A549 (cell line): ENCODE measurements at regions of chr5 and their contacts with region 1.

Region 1: DNA sequence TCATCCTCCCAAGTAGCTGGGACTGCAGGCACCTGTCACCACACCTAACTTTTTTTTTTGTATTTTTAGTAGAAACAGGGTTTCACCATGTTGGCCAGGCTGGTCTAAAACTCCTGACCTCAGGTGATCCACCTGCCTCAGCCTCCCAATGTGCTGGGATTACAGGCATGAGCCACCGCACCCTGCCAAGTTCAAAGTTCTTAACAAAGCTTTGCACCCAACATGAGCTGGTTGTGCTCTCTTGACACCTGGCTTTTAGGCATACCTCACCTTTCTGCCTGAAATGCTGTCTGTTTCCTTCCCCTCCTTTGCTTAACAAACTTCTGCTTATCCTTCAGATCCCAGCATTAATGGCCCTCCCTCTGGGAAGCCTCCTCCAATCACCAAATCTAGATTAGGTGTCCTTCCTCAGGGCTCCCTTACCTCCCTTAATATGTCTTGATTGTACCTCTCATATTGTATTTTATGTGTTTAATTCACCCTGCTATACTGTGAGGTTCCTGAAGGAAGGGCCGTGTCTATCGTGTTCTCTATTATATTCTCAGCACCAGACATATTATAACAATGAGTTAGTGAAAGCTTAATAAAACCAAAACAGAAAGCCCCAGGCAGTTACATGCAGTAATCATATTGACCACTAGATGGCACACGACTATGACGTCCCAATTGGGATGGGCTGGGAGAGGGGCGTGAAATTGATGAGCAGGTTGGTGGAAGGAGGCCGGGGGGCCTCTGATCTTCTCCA is 62.9 kb upstream of the PPARGC1B start:
- DNase-seq: peak; percentile 47 to 62
- ATAC-seq: peak; percentile 60 to 79; a peak in 5 of 6 replicates
- H3K4me3 ChIP-seq: no peak overlapping the region
- H3K27ac ChIP-seq: no peak overlapping the region
- H3K4me1 ChIP-seq: peaks cover 23% of the 10 kb centered on the region
- CTCF ChIP-seq: peak; percentile 88
- EP300 ChIP-seq: no peak
- POLR2A ChIP-seq: no peak
- RAD21 ChIP-seq: peak; percentile 71 to 72

Region 2: GRCh38 chr5:149646564-149646963 is 20.7 kb before region 1 on chr5:
- CTCF ChIA-PET with region 1: interaction called, 90 read pairs
- POLR2A ChIA-PET with region 1: no interaction called
- DNase-seq: no peak
- ATAC-seq: no peak
- H3K4me3 ChIP-seq: no peak overlapping the region
- H3K27ac ChIP-seq: no peak overlapping the region
- H3K4me1 ChIP-seq: no peaks in the 10 kb centered on the region
- CTCF ChIP-seq: no peak
- EP300 ChIP-seq: no peak
- POLR2A ChIP-seq: no peak
- RAD21 ChIP-seq: no peak

Region 3: DNA sequence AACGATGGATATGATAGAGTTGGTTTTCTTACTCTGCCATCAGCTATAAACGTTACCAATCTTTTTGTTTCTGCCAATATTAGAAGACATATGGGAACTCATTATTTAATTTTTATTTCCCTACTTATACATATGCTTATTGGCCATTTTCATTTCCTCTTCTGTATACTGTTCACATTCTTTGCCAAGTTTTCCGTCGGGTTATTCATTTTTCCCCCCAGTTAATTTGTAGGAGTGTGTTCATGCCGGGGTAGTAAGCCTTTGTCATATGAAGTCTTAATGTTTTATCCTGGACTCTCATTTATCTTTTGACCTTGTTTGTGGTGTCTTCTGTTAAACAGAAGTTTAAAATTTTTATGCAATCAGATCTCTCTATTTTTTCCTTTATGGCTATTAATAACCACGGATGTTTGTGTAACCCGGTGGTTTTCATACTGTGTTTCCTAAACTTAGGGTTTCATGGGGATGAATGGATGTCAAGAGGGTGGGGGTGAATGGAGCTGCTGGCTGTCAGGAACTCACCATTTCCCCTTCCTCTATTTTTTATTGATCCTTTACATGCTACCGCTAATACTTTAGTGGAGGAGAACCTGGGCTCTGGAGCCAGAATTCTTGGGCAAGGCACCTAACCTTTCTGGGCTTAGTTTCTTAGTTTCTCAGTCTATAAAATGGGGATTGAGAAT is 20.4 kb after region 1 on chr5:
- CTCF ChIA-PET with region 1: interaction called, 27 read pairs
- POLR2A ChIA-PET with region 1: no interaction called
- DNase-seq: no peak
- ATAC-seq: no peak
- H3K4me3 ChIP-seq: no peak overlapping the region
- H3K27ac ChIP-seq: no peak overlapping the region
- H3K4me1 ChIP-seq: no peaks in the 10 kb centered on the region
- CTCF ChIP-seq: no peak
- EP300 ChIP-seq: no peak
- POLR2A ChIP-seq: no peak
- RAD21 ChIP-seq: no peak

Region 4: DNA sequence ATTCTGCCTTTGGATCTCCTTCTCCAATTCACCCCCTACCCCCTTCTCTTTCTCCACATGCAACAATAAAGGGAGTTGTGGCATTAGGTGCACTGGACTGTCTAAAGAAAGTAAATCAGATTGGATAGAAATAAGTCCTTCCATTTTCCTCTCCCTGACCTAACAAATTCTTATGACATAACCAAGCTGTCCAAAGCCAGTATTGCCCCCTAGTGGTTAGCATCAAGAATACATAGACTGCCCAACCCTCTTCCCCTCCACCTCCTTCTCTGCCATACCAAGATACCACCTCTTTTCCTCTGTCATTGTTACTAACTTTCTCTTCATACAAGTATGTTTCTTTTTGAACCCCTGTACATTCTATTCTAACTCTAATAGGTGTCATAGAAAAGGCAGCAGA is 108.5 kb after region 1 on chr5:
- CTCF ChIA-PET with region 1: interaction called, 19 read pairs
- POLR2A ChIA-PET with region 1: no interaction called
- DNase-seq: peak; percentile 40 to 73
- ATAC-seq: peak; percentile 79 to 87; a peak in 4 of 6 replicates
- H3K4me3 ChIP-seq: no peak overlapping the region
- H3K27ac ChIP-seq: no peak overlapping the region
- H3K4me1 ChIP-seq: no peaks in the 10 kb centered on the region
- CTCF ChIP-seq: peak; percentile 54
- EP300 ChIP-seq: no peak
- POLR2A ChIP-seq: no peak
- RAD21 ChIP-seq: peak; percentile 36 to 55; a peak in 3 of 5 replicates

Region 5: GRCh38 chr5:149828161-149828884 is 161.1 kb after region 1 on chr5:
- CTCF ChIA-PET with region 1: interaction called, 106 read pairs
- POLR2A ChIA-PET with region 1: no interaction called
- DNase-seq: peak; percentile 91 to 96
- ATAC-seq: peak; percentile 89 to 94
- H3K4me3 ChIP-seq: no peak overlapping the region
- H3K27ac ChIP-seq: peak overlapping the region; percentile 29 to 67; a peak in 4 of 6 replicates
- H3K4me1 ChIP-seq: peaks cover 5% of the 10 kb centered on the region; the same call in 1 of the 3 replicates
- CTCF ChIP-seq: peak; percentile 97
- EP300 ChIP-seq: no peak
- POLR2A ChIP-seq: no peak
- RAD21 ChIP-seq: peak; percentile 97

Region 6: GRCh38 chr5:149990518-149991376 is 323.5 kb after region 1 on chr5:
- CTCF ChIA-PET with region 1: interaction called, 13 read pairs
- POLR2A ChIA-PET with region 1: no interaction called
- DNase-seq: peak; percentile 81 to 82
- ATAC-seq: peak; percentile 87 to 93
- H3K4me3 ChIP-seq: no peak overlapping the region
- H3K27ac ChIP-seq: no peak overlapping the region
- H3K4me1 ChIP-seq: no peaks in the 10 kb centered on the region
- CTCF ChIP-seq: peak; percentile 98
- EP300 ChIP-seq: no peak
- POLR2A ChIP-seq: no peak
- RAD21 ChIP-seq: peak; percentile 93 to 99